Activated CD8-positive, alpha-beta memory T cell treated with anti-CD3 and anti-CD28 coated beads, Interleukin-2, amount 10 ng/mL, durations not matched to agents 7 days and 5 days (primary cell): ENCODE measurements at regions of chr6 and their contacts with region 1.

Region 1: DNA sequence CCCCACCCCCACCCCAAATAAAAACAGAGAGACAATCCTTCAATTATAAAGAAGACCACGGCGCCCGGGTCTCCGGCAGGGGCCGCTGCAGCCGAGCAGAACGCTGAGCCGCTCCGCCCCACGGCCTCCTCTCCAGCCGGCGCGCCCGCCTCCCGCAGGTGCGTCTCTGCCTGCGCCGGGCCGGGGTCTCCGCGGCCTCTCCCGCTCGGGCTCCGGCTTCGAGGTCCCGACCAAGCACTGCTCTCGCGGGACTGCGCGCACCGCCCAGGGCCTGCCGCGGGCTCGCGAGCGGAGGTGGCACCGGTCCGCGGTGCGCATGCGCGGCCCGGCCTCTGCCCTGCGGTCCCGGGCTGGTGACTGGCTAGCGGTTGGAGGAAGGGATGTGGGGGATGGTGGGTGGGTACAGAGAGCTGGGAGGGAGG is 241 bp upstream of the SIRT5 start:
- DNase-seq: peak; percentile 95
- ATAC-seq: peak; percentile 80
- H3K4me3 Mint-ChIP-seq: peak overlapping the region; percentile 89
- H3K27ac Mint-ChIP-seq: peak overlapping the region; percentile 99
- H3K4me1 Mint-ChIP-seq: peaks cover 24% of the 10 kb centered on the region
- H3K27me3 Mint-ChIP-seq: no peaks in the 10 kb centered on the region

Region 2: GRCh38 chr6:13336553-13336952 is 237.6 kb before region 1 on chr6:
- CTCF ChIA-PET with region 1: interaction called, 32 read pairs
- DNase-seq: peak; percentile 84
- ATAC-seq: peak; percentile 77
- H3K4me3 Mint-ChIP-seq: no peak overlapping the region
- H3K27ac Mint-ChIP-seq: no peak overlapping the region
- H3K4me1 Mint-ChIP-seq: peaks cover 11% of the 10 kb centered on the region
- H3K27me3 Mint-ChIP-seq: peaks cover 7% of the 10 kb centered on the region

Region 3: GRCh38 chr6:13454286-13455221 is 119.6 kb before region 1 on chr6:
- CTCF ChIA-PET with region 1: interaction called, 12 read pairs
- DNase-seq: peak; percentile 78
- ATAC-seq: peak; percentile 69
- H3K4me3 Mint-ChIP-seq: peak overlapping the region; percentile 58
- H3K27ac Mint-ChIP-seq: peak overlapping the region; percentile 91
- H3K4me1 Mint-ChIP-seq: peaks cover 41% of the 10 kb centered on the region
- H3K27me3 Mint-ChIP-seq: no peaks in the 10 kb centered on the region

Region 4: GRCh38 chr6:13561624-13562267 is 12.4 kb before region 1 on chr6:
- CTCF ChIA-PET with region 1: interaction called, 41 read pairs
- DNase-seq: no peak
- ATAC-seq: no peak
- H3K4me3 Mint-ChIP-seq: no peak overlapping the region
- H3K27ac Mint-ChIP-seq: no peak overlapping the region
- H3K4me1 Mint-ChIP-seq: no peaks in the 10 kb centered on the region
- H3K27me3 Mint-ChIP-seq: peaks cover 16% of the 10 kb centered on the region

Region 5: GRCh38 chr6:13614926-13615798 is 41.0 kb after region 1 on chr6 and contains the start of gene NOL7:
- CTCF ChIA-PET with region 1: interaction called, 61 read pairs
- DNase-seq: peak; percentile 98
- ATAC-seq: peak; percentile 92
- H3K4me3 Mint-ChIP-seq: peak within 1 kb of the TSS; percentile 96
- H3K27ac Mint-ChIP-seq: peak within 1 kb of the TSS; percentile 94
- H3K4me1 Mint-ChIP-seq: peaks cover 56% of the 10 kb centered on the region
- H3K27me3 Mint-ChIP-seq: no peaks in the 10 kb centered on the region
- total RNA-seq, gene NOL7: 56.6 to 70.9 TPM